Caco-2 (cell line): ENCODE measurements at regions of chr7 and their contacts with region 1.

Region 1: DNA sequence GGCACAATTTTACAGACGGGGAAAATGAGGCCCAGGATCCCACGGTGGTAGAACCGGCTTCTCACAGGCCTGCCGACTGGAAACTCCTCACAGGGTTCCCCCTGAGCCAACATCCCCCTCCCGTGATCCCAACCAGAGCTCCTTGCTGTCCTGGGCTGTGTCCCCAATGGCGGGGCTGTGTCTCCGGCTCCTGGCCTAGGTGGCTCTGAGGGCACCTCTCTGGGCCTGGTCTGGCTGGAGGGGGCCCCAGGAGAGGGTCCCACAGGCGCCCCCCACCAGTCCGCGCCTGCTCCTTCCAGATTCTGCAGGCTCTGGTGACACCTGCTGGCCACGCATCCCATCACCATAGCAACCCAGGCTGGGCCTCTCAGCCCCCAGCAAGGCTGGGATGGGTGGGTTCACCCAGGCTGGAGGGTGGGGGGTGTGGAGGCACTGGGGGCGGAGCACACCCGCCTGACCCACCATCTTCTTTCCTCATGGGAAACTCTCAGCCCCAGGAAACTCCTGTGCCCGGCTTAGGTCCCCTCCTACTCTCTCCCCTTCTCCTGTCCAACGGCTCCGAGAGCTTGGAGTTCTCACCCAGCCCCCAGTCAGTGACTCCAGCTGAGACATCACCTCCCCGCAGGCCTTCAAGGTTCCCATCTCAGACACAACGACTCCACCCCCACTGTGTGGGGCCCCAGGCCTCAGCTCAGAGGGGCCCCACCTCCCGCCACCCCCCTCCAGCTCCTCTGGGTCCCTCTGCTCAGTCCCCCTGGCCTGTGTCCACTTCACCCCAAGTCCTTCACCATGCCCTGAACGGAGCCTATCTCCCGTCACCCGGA is 27.1 kb upstream of the TNRC18 start:
- DNase-seq: peak; percentile 69 to 76
- H3K4me3 ChIP-seq: no peak overlapping the region
- H3K4me3 Mint-ChIP-seq: no peak overlapping the region
- H3K27ac Mint-ChIP-seq: peak overlapping the region; percentile 35
- H3K4me1 ChIP-seq: peaks cover 8% of the 10 kb centered on the region; the same call in 1 of the 2 replicates
- H3K4me1 Mint-ChIP-seq: peaks cover 11% of the 10 kb centered on the region
- H3K27me3 ChIP-seq: no peaks in the 10 kb centered on the region
- H3K27me3 Mint-ChIP-seq: no peaks in the 10 kb centered on the region
- CTCF ChIP-seq: peak; percentile 78

Region 2: DNA sequence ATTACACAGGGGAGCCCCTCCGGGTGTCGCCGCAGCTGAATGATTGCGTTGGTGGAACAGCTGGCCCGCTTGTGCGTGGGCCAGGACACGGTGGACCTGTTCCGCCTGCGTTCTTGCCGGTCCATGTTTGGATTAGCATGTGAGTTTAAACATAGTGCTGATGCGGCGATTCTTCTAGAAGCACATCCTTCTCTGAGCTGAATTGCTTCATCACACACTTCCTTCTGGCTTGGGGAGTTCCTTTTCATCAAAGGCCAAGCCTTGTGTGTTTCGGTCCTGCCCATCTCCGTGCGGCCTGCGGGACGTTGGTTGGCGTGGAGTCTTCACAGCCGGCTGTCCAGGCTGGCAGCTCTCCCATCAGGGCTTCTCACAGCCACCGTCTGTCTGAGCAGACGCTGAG is 213.5 kb before region 1 on chr7:
- CTCF ChIA-PET with region 1: interaction called, 25 read pairs
- POLR2A ChIA-PET with region 1: no interaction called
- intact Hi-C with region 1: loop called (anchors 1 kb)
- DNase-seq: no peak
- H3K4me3 ChIP-seq: no peak overlapping the region
- H3K4me3 Mint-ChIP-seq: no peak overlapping the region
- H3K27ac Mint-ChIP-seq: no peak overlapping the region
- H3K4me1 ChIP-seq: peaks cover 13% of the 10 kb centered on the region
- H3K4me1 Mint-ChIP-seq: no peaks in the 10 kb centered on the region
- H3K27me3 ChIP-seq: no peaks in the 10 kb centered on the region
- H3K27me3 Mint-ChIP-seq: no peaks in the 10 kb centered on the region
- CTCF ChIP-seq: no peak

Region 3: GRCh38 chr7:5363729-5364128 is 87.0 kb before region 1 on chr7:
- CTCF ChIA-PET with region 1: interaction called, 19 read pairs
- POLR2A ChIA-PET with region 1: no interaction called
- intact Hi-C with region 1: loop called (anchors 1 kb)
- DNase-seq: no peak
- H3K4me3 ChIP-seq: no peak overlapping the region
- H3K4me3 Mint-ChIP-seq: no peak overlapping the region
- H3K27ac Mint-ChIP-seq: no peak overlapping the region
- H3K4me1 ChIP-seq: no peaks in the 10 kb centered on the region; the same call in 1 of the 2 replicates
- H3K4me1 Mint-ChIP-seq: no peaks in the 10 kb centered on the region
- H3K27me3 ChIP-seq: no peaks in the 10 kb centered on the region
- H3K27me3 Mint-ChIP-seq: no peaks in the 10 kb centered on the region
- CTCF ChIP-seq: no peak

Region 4: GRCh38 chr7:5396999-5397663 is 53.6 kb before region 1 on chr7:
- CTCF ChIA-PET with region 1: interaction called, 7 read pairs
- POLR2A ChIA-PET with region 1: interaction called, 3 read pairs
- intact Hi-C with region 1: loop called (anchors 2 kb)
- DNase-seq: no peak
- H3K4me3 ChIP-seq: no peak overlapping the region
- H3K4me3 Mint-ChIP-seq: no peak overlapping the region
- H3K27ac Mint-ChIP-seq: peak overlapping the region; percentile 79
- H3K4me1 ChIP-seq: peaks cover 7% of the 10 kb centered on the region
- H3K4me1 Mint-ChIP-seq: peaks cover 7% of the 10 kb centered on the region
- H3K27me3 ChIP-seq: no peaks in the 10 kb centered on the region
- H3K27me3 Mint-ChIP-seq: no peaks in the 10 kb centered on the region
- CTCF ChIP-seq: no peak

Region 5: GRCh38 chr7:5428478-5429252 is 22.1 kb before region 1 on chr7:
- CTCF ChIA-PET with region 1: interaction called, 17 read pairs
- POLR2A ChIA-PET with region 1: no interaction called
- intact Hi-C with region 1: no loop called
- DNase-seq: peak; percentile 83
- H3K4me3 ChIP-seq: peak overlapping the region; percentile 85
- H3K4me3 Mint-ChIP-seq: peak overlapping the region; percentile 91
- H3K27ac Mint-ChIP-seq: peak overlapping the region; percentile 97
- H3K4me1 ChIP-seq: peaks cover 7% of the 10 kb centered on the region
- H3K4me1 Mint-ChIP-seq: peaks cover 15% of the 10 kb centered on the region
- H3K27me3 ChIP-seq: no peaks in the 10 kb centered on the region
- H3K27me3 Mint-ChIP-seq: no peaks in the 10 kb centered on the region
- CTCF ChIP-seq: peak in 1 of 2 experiments; percentile 11